ENCODE measurements at regions of chr3 and their contacts with region 1.

Region 1: GRCh38 chr3:187679638-187680396 is 9.6 kb upstream of the SST start:
- DNase-seq: peak; percentile 68

Region 2: GRCh38 chr3:187616307-187616972 is 63.4 kb before region 1 on chr3:
- CTCF ChIA-PET with region 1: interaction called, 15 read pairs
- POLR2A ChIA-PET with region 1: no interaction called
- DNase-seq: peak; percentile 44

Region 3: DNA sequence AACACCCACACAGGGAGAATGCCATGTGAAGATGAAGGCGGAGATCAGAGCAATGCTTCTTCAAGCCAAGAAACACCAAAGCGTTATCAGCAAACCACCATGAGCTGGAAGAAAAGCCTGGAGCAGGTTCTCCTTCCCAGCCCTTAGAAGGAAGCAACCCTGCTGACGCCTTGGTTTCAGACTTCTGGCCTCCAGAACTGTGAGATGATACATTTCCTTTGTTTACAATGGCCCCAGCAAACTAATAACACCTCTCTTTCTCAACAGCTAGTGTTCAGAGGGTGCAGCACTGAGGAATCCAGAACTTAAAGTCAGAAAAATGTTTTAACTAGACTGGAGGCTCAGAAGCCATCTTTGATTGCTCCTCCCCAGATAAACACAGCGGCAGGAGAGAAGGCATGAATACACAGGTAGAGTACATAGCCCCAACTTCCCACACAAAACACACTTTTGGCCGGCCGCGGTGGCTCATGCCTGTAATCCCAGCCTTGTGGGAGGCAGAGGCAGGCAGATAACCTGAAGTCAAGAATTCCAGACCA is 341.8 kb after region 1 on chr3:
- CTCF ChIA-PET with region 1: no interaction called
- POLR2A ChIA-PET with region 1: no interaction called
- DNase-seq: no peak

Measured in HEK293T (cell line).